Spleen (tissue), 13 donors: ENCODE measurements at regions of chr7 and their contacts with region 1.

Region 1: DNA sequence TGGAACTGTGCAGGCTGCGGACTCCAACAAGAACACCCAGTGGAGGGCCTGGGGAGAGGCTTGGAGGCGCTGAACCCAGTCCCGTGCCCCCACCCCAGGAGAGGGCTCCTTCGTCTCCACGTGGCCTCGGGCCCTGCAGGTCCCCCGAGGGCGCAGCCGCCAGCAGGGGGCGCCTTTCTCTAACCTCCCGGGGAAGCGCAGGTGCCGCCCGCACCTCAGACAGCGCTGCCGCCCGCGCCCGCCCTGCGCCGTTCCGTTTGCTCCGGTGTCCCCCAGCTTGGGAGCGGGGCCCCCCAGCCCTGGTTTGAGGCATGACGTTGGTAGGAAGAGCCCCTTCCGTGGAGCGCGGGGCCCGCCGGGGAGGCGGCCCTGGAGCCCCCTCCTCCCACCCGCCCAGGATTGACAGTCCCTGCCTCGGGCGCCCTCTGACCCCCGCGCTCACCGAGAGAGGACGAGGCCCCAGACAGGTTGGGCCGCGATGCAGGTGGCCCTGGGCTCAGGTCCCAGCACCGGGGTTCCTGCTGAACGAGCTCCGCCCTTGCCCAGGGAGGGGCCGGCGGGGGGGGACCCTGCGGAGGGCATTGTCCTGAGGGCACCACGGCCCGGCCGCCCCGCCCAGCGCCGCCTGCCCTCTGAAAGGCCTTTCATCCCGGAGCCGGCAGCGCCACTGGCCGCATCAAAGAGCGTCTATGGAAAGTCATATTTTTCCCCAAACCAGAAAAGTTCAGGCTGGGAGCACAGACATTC is 42.8 kb downstream of the FOXL3 start:
- DNase-seq: peak; percentile 93
- H3K4me3 ChIP-seq: peak overlapping the region in 6 of 8 donors; percentile 17 to 62 (median 28)
- H3K27ac ChIP-seq: peak overlapping the region in 4 of 8 donors; percentile 33 to 58 (median 56)
- H3K4me1 ChIP-seq: peaks cover 0 to 16% (median 13%) of the 10 kb centered on the region in 6 donors
- H3K27me3 ChIP-seq: peaks cover 0 to 16% (median 0%) of the 10 kb centered on the region in 7 donors
- CTCF ChIP-seq: peak; percentile 67 to 96 (median 93)
- POLR2A ChIP-seq: no peak

Region 2: DNA sequence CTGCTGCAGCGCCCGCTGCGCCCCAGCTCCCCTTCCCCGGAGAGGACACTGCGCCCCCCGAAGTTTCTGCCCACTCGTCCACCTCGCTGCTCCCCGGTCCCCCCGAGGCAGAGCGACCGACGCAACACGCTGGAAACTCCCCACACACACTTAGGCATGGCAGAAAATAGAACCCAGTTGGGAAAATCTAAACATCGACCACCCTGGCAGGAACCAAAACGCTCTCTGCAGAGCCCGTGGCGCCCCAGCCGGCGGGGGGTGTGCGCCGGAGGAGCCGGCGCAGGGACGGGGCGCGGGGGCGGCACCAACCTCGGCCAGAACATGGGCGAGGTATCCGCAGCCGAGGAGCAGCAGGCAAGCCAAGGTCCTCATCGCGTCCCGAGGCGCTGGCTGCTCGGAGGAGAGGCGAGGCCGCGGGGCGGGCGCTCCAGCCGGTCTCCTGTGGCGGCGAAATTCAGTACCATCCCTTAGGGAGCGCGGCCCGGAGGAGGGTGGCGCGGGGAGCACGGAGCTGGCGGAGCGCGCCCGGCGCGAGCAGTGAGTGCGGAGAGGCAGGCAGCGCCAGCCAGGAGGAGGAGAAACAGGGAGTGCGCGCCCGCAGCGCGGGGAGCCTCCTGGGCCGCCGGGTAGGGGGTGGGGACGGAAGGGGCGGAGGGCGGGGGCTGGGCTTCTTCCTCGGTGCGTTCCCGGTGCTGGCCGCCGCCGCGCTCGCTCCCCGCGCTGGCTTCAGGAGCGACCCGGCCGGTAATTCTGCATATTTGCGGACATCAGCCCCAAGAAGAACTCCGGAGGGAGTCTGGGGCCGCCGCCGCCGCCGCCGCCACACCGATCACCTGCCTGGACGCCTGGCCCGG is 186.0 kb after region 1 on chr7:
- intact Hi-C with region 1: loop called (anchors 5 kb)
- DNase-seq: no peak
- H3K4me3 ChIP-seq: peak overlapping the region; percentile 39 to 85 (median 66)
- H3K27ac ChIP-seq: peak overlapping the region; percentile 39 to 90 (median 87)
- H3K4me1 ChIP-seq: peaks cover 25 to 93% (median 75%) of the 10 kb centered on the region in 6 donors
- H3K27me3 ChIP-seq: peaks cover 0 to 88% (median 62%) of the 10 kb centered on the region in 7 donors
- CTCF ChIP-seq: peak in 3 of 11 experiments; percentile 15 to 28 (median 22)
- POLR2A ChIP-seq: peak in 1 of 3 donors; percentile 54

Region 3: GRCh38 chr7:636396-636795 is 303.6 kb after region 1 on chr7:
- intact Hi-C with region 1: loop called (anchors 10 kb)
- DNase-seq: no peak
- H3K4me3 ChIP-seq: no peak overlapping the region
- H3K27ac ChIP-seq: peak overlapping the region in 5 of 8 donors; percentile 31 to 72 (median 63)
- H3K4me1 ChIP-seq: peaks cover 0 to 20% (median 3%) of the 10 kb centered on the region in 6 donors
- H3K27me3 ChIP-seq: no peaks in the 10 kb centered on the region
- CTCF ChIP-seq: peak in 10 of 11 experiments; percentile 15 to 69 (median 45)
- POLR2A ChIP-seq: no peak